H1 (cell line): ENCODE measurements at regions of chr1 and their contacts with region 1.

Region 1: DNA sequence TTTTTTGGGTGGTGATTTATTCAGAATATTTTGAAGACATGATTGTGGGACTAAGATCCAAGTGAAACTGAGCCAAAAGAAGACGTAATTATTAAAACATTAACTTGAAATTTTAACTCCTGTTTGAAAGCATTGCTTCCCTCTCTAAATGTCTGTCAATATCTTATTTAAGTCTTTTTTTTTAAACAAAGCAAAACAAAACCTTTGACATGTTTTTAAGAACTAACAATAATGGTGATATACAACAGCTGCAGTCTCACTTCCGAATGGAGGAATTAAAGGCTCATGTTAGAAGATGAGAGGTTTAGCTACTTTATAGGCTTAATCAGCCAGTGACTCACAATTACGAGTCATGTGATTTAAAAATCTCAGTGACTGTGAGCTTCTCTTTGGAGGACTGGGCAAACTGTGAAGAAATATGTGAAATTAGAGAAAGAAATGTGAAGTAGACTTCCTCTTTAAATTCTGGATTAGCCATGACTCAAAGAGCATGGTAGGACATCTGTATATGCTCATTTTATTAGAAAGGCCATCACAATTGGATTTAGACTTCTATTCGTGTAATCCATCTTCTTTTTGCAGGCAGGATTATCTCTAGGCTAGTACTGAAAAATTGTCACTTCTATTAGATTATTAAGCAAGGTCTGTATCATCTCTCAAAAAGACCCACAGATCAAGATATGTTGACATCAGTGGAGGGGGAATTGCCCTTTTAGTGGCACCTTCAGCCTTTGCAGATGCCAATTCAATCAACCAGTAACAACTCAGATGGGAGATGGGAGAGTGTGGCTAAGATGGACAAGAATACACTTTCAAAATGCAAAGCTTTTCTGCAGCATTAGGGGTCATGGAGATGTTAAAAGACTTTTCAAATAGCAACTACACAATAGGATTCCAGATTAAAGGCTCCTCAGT is 28.7 kb downstream of the KCNA3 start:
- DNase-seq: no peak
- H3K4me3 ChIP-seq: no peak overlapping the region
- H3K27ac ChIP-seq: no peak overlapping the region
- H3K4me1 ChIP-seq: no peaks in the 10 kb centered on the region
- H3K27me3 ChIP-seq: no peaks in the 10 kb centered on the region
- CTCF ChIP-seq: no peak
- EP300 ChIP-seq: no peak
- POLR2A ChIP-seq: no peak
- RAD21 ChIP-seq: no peak

Region 2: DNA sequence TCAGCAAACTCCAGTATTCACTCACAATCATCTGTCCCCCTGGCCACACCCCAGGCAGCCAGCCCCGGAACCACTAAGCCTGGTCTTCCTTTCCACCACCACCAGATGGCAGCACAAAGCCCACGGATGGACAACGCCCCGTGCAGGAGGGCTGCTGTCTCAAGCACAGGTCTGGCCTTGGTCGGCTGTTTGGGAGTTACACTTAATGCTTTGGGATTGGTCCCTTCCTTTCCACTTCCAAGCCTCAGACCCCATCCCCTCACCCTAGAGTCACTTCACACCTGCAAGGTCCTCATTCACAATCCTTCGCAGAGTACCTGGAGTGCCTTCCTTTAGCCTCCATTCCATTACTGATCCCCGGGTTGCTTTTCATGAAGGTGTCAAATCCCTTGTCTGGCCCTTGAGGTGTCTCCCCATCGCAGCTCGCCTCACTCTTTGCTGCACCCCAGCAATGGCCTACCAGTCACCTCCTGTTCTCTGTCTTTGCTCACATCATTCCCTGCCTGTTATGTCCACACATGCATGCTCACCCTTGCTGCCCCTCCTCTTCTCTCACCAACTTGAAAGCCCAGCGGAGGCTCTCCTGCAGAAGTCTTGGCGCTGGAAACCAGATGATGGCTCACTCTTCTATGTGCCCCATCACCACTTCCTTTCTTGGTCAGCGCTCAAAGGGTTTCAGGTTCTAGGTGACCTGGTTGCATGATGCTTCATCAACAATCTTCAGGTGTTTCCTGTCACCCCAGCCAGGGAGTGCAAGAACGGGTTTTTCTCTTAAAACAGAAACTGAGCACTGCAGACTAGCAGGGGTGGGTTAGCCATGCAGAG is 15.0 kb before region 1 on chr1:
- CTCF ChIA-PET with region 1: interaction called, 14 read pairs
- POLR2A ChIA-PET with region 1: no interaction called
- DNase-seq: peak; percentile 54 to 89
- H3K4me3 ChIP-seq: no peak overlapping the region
- H3K27ac ChIP-seq: no peak overlapping the region
- H3K4me1 ChIP-seq: no peaks in the 10 kb centered on the region
- H3K27me3 ChIP-seq: peaks cover 0 to 11% (median 0%) of the 10 kb centered on the region in 4 experiments; a peak in 2 of 7 replicates
- CTCF ChIP-seq: peak; percentile 85 to 93 (median 88)
- EP300 ChIP-seq: no peak
- POLR2A ChIP-seq: no peak
- RAD21 ChIP-seq: peak; percentile 83 to 86